SK-N-SH (cell line): ENCODE measurements at regions of chr19 and their contacts with region 1.

Region 1: DNA sequence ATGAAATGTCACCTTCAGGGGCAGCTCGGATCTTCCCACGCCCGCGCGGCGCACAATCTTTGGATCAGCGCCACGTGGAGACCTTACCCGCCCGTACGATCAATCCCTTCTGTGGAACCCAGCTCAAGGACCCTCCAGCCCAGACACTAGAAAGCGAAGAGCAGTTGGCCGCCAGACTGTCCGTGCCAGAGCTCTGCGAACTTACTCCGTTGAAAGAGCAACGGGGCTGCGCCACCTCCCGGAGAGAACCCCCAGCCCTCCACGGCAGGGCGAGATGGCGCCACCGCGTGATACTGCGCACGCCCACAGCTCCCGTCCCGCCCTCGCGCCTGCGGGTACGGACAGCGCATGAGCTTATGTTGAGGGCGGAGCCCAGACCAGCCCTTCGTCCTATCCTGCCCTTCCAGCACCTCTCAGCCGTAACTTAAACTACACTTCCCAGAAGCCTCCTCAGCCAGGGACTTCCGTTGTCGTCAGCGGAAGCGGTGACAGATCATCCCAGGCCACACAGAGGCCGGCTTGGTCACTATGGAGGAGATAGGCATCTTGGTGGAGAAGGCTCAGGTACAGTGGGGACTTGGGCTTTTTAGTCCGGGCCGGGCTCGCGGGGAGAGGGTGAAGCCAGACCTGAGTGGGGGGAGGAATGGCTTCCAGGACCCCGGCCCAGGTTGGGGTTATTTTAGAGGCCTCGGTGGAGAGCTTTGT is at the start of gene PSMC4:
- DNase-seq: peak; percentile 96
- H3K4me3 ChIP-seq: peak within 1 kb of the TSS; percentile 71 to 98
- H3K27ac ChIP-seq: peak within 1 kb of the TSS; percentile 70 to 82
- H3K4me1 ChIP-seq: peaks cover 11 to 12% of the 10 kb centered on the region in 2 experiments; a peak in 2 of 4 replicates
- H3K27me3 ChIP-seq: no peaks in the 10 kb centered on the region
- CTCF ChIP-seq: peak; percentile 75
- EP300 ChIP-seq: no peak
- RAD21 ChIP-seq: peak; percentile 73
- polyA plus RNA-seq, gene PSMC4: 172 and 173 TPM in 2 replicates

Region 2: DNA sequence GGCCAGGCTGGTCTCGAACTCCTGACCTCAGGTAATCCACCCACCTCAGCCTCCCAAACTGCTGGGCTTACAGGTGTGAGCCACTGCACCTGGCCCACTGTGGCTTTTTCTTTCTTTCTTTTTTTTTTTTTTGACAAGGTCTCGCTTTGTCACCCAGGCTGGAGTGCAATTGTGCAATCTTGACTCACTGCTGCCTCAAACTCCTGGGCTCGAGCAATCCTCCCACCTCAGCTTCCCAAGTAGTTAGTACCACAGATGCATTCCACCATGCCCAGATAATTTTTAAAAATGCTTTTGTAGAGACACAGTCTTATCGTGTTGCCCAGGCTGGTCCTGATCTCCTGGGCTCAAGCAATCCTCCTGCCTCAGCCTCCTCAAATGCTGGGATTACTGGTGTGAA is 24.3 kb before region 1 on chr19:
- CTCF ChIA-PET with region 1: interaction called, 10 read pairs
- POLR2A ChIA-PET with region 1: no interaction called
- DNase-seq: no peak
- H3K4me3 ChIP-seq: no peak overlapping the region
- H3K27ac ChIP-seq: no peak overlapping the region
- H3K4me1 ChIP-seq: no peaks in the 10 kb centered on the region; a peak in 2 of 4 replicates
- H3K27me3 ChIP-seq: no peaks in the 10 kb centered on the region
- CTCF ChIP-seq: no peak
- EP300 ChIP-seq: no peak
- RAD21 ChIP-seq: no peak